ENCODE measurements at regions of chr10 and their contacts with region 1.

Region 1: GRCh38 chr10:101012525-101013364 is 13.1 kb downstream of the LZTS2 start:
- DNase-seq: peak; percentile 50 to 86 (median 66)
- H3K4me3 ChIP-seq: no peak overlapping the region
- H3K4me3 Mint-ChIP-seq: no peak overlapping the region
- H3K27ac ChIP-seq: no peak overlapping the region
- H3K27ac Mint-ChIP-seq: peak overlapping the region in 2 of 8 donors; percentile 11 to 69
- H3K4me1 ChIP-seq: peaks cover 13% of the 10 kb centered on the region
- H3K4me1 Mint-ChIP-seq: peaks cover 9 to 17% (median 16%) of the 10 kb centered on the region in 3 donors
- H3K27me3 ChIP-seq: peaks cover 14% of the 10 kb centered on the region
- H3K27me3 Mint-ChIP-seq: peaks cover 26 to 29% of the 10 kb centered on the region in 2 donors

Region 2: DNA sequence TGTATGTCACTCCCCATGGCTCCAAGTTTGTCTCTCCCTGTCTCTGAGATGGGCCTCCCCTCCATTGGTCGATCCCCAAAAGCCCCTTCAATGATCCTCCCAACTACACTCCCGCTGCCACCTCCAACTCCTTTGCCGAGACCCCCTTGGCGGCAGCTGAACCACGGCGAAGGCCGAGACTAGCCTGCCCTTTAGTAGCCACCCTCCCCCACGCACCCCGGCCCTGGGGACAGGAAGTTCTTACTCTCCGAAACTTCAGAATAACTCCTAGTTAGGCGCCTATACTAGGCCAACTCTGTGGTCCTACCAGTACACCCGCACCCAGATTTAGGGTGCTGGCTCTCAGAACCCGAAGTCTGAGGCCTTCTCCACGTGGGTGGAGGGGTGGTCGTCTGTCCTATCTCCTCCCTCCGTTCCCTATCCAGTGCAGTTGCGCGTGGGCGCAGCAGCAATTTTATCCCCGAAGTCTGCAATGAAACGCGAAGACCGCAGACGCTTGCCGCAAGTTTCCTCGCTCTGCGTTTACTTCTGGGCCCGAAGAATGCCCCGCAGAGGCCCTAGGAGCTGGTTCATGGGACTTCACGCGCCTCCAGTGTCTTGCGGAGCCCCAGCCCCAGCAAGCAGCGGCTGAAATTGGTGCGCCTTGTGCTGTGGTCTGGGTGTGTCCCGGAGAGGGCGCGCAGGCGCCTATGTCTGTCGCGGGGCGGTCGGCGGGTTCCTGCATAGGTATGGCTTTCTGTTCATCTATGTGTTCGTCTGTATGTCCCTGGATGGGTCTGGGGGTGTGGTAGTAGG is 182.6 kb before region 1 on chr10:
- CTCF ChIA-PET with region 1: no interaction called
- POLR2A ChIA-PET with region 1: no interaction called
- DNase-seq: no peak
- H3K4me3 ChIP-seq: no peak overlapping the region
- H3K4me3 Mint-ChIP-seq: peak overlapping the region; percentile 46 to 79 (median 70)
- H3K27ac ChIP-seq: no peak overlapping the region
- H3K27ac Mint-ChIP-seq: peak overlapping the region in 1 of 8 donors; percentile 71
- H3K4me1 ChIP-seq: peaks cover 30% of the 10 kb centered on the region
- H3K4me1 Mint-ChIP-seq: peaks cover 24 to 49% (median 33%) of the 10 kb centered on the region in 3 donors
- H3K27me3 ChIP-seq: peaks cover 59% of the 10 kb centered on the region
- H3K27me3 Mint-ChIP-seq: peaks cover 29 to 65% of the 10 kb centered on the region in 2 donors

Region 3: DNA sequence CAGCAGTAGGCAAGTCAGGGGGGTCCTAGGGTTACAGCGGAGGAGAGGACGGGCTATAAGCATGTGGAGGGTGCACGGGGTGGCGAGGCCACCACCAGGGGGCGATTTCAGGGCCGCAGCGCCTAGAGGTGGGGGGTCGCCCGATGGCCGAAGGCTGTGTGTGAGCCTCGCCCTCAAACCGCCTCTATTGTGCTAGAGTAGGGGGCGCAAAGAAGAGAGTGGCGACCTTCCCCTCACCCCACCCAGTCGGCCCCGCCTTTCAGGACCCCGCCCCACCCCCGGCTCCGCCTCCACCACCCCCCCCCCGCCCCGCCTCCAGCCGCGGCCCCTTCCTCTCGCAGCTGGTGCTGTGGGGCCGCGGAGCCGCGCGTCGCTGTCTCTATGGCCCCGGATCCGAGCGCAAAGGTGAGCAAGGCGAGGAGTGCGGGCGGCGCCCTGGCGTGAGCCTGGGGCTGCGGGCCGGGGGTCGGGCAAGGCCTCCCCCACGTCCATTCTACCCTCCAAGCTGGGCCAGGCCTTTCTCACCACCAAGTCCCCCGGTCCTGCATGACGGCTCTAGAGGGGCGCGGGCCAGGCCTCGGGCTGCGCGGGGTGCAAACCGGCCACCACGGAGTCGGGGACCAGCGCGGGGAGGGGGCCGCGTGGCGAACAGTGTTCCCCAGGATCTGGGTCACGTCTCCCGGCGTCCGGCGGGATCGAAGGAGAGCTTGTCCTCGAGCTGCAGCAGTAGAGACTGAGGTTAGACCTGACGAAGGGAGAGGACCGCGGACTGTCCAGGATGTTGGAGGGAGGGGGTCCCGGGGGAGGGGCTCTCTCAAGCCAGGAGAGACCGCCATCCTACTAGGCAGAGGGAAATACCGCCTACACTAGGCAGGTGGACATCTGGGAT is 43.3 kb before region 1 on chr10 and contains the start of gene SEMA4G:
- CTCF ChIA-PET with region 1: interaction called, 16 read pairs
- POLR2A ChIA-PET with region 1: interaction called, 4 read pairs
- DNase-seq: peak in 4 of 5 donors; percentile 23 to 47 (median 28)
- H3K4me3 ChIP-seq: peak within 1 kb of the TSS; percentile 47
- H3K4me3 Mint-ChIP-seq: peak within 1 kb of the TSS; percentile 69 to 89 (median 77)
- H3K27ac ChIP-seq: no peak within 1 kb of the TSS
- H3K27ac Mint-ChIP-seq: peak within 1 kb of the TSS in 6 of 8 donors; percentile 10 to 77 (median 34)
- H3K4me1 ChIP-seq: peaks cover 5% of the 10 kb centered on the region
- H3K4me1 Mint-ChIP-seq: peaks cover 8 to 20% (median 20%) of the 10 kb centered on the region in 3 donors
- H3K27me3 ChIP-seq: no peaks in the 10 kb centered on the region
- H3K27me3 Mint-ChIP-seq: no peaks in the 10 kb centered on the region
- total RNA-seq, gene SEMA4G: 0.49 to 0.57 TPM

Region 4: GRCh38 chr10:100986952-100987750 is 25.6 kb before region 1 on chr10 and contains the starts of genes MRPL43 and TWNK:
- CTCF ChIA-PET with region 1: interaction called, 11 read pairs
- POLR2A ChIA-PET with region 1: no interaction called
- DNase-seq: peak; percentile 78 to 89 (median 79)
- H3K4me3 ChIP-seq: peak within 1 kb of the TSS; percentile 99
- H3K4me3 Mint-ChIP-seq: peak within 1 kb of the TSS; percentile 86 to 99 (median 93)
- H3K27ac ChIP-seq: peak within 1 kb of the TSS; percentile 76
- H3K27ac Mint-ChIP-seq: peak within 1 kb of the TSS; percentile 44 to 96 (median 88)
- H3K4me1 ChIP-seq: peaks cover 28% of the 10 kb centered on the region
- H3K4me1 Mint-ChIP-seq: peaks cover 38 to 58% (median 40%) of the 10 kb centered on the region in 3 donors
- H3K27me3 ChIP-seq: no peaks in the 10 kb centered on the region
- H3K27me3 Mint-ChIP-seq: peaks cover 0 to 1% of the 10 kb centered on the region in 2 donors
- total RNA-seq, gene MRPL43: 62.5 to 62.8 TPM
- total RNA-seq, gene TWNK: 40.6 to 44.3 TPM

Region 5: GRCh38 chr10:101031128-101031795 is 18.5 kb after region 1 on chr10 and contains the starts of genes PDZD7 and SFXN3:
- CTCF ChIA-PET with region 1: interaction called, 20 read pairs
- POLR2A ChIA-PET with region 1: interaction called, 3 read pairs
- DNase-seq: peak; percentile 94 to 97 (median 95)
- H3K4me3 ChIP-seq: peak within 1 kb of the TSS; percentile 85
- H3K4me3 Mint-ChIP-seq: peak within 1 kb of the TSS; percentile 92 to 98 (median 93)
- H3K27ac ChIP-seq: peak within 1 kb of the TSS; percentile 94
- H3K27ac Mint-ChIP-seq: peak within 1 kb of the TSS; percentile 94 to 100 (median 98)
- H3K4me1 ChIP-seq: peaks cover 15% of the 10 kb centered on the region
- H3K4me1 Mint-ChIP-seq: peaks cover 18 to 25% (median 22%) of the 10 kb centered on the region in 3 donors
- H3K27me3 ChIP-seq: no peaks in the 10 kb centered on the region
- H3K27me3 Mint-ChIP-seq: peaks cover 3 to 5% of the 10 kb centered on the region in 2 donors
- total RNA-seq, gene PDZD7: 0.31 to 0.33 TPM
- total RNA-seq, gene SFXN3: 25.2 to 26.5 TPM

Region 6: DNA sequence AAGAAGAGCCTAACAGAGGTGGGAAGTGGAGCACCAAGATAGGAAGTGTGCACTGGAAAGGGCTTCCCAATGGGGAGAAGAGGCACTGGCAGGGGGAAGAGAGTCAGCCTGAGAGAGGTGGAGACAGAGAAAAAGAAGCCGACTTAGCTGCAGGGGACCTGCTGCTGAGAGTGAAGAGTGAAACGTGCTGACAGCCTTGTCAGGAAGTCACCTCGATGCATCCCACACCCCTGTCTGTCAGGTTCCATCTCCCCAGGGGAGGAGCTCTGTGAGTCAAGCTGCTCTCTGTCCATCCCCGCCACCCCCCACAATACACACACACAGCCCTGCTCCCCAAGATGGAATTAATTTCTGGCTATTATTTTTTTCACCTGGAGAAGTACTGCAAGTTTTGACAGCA is 63.0 kb after region 1 on chr10:
- CTCF ChIA-PET with region 1: no interaction called
- POLR2A ChIA-PET with region 1: no interaction called
- DNase-seq: no peak
- H3K4me3 ChIP-seq: no peak overlapping the region
- H3K4me3 Mint-ChIP-seq: no peak overlapping the region
- H3K27ac ChIP-seq: no peak overlapping the region
- H3K27ac Mint-ChIP-seq: no peak overlapping the region
- H3K4me1 ChIP-seq: no peaks in the 10 kb centered on the region
- H3K4me1 Mint-ChIP-seq: no peaks in the 10 kb centered on the region
- H3K27me3 ChIP-seq: no peaks in the 10 kb centered on the region
- H3K27me3 Mint-ChIP-seq: peaks cover 26 to 75% of the 10 kb centered on the region in 2 donors